Activated T-helper 1 cell treated with anti-CD3 and anti-CD28 coated beads, Interleukin-12 subunit alpha, Interleukin-12 subunit beta, Interleukin-2, Interleukin-4 antibody, amounts not matched to agents 30 ng/mL and 10 ng/mL and 1 ng/mL, durations not matched to agents 14 hours and 24 hours and 36 hours (primary cell): ENCODE measurements at regions of chr10 and their contacts with region 1.

Region 1: GRCh38 chr10:6014241-6014761 is 37.0 kb upstream of the IL15RA start:
- DNase-seq: peak; percentile 30
- H3K4me3 Mint-ChIP-seq: peak overlapping the region; percentile 13
- H3K27ac Mint-ChIP-seq: peak overlapping the region; percentile 78
- H3K4me1 Mint-ChIP-seq: peaks cover 74% of the 10 kb centered on the region
- H3K27me3 Mint-ChIP-seq: no peaks in the 10 kb centered on the region

Region 2: DNA sequence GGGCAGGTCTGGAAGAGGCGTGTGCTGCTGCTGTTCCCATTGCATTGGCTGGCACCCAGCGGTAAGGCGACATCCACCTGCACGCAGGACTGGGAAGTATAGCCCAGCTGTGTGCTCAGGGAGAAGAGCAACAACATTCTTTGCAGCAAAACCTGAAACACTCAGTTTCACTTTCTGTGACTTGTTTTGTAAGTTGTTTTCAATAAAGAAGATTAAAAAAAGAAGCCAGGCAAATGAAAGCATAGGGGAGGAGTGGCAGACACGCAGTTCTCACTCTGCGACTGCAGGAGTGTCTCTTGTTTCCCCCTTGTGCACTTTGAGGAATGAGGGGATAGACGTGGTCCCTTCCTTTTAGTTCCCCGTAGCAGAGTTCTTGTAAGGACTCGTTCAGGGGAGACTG is 118.5 kb before region 1 on chr10:
- intact Hi-C with region 1: no loop called
- DNase-seq: no peak
- H3K4me3 Mint-ChIP-seq: peak overlapping the region; percentile 51
- H3K27ac Mint-ChIP-seq: peak overlapping the region; percentile 45
- H3K4me1 Mint-ChIP-seq: peaks cover 56% of the 10 kb centered on the region
- H3K27me3 Mint-ChIP-seq: no peaks in the 10 kb centered on the region

Region 3: DNA sequence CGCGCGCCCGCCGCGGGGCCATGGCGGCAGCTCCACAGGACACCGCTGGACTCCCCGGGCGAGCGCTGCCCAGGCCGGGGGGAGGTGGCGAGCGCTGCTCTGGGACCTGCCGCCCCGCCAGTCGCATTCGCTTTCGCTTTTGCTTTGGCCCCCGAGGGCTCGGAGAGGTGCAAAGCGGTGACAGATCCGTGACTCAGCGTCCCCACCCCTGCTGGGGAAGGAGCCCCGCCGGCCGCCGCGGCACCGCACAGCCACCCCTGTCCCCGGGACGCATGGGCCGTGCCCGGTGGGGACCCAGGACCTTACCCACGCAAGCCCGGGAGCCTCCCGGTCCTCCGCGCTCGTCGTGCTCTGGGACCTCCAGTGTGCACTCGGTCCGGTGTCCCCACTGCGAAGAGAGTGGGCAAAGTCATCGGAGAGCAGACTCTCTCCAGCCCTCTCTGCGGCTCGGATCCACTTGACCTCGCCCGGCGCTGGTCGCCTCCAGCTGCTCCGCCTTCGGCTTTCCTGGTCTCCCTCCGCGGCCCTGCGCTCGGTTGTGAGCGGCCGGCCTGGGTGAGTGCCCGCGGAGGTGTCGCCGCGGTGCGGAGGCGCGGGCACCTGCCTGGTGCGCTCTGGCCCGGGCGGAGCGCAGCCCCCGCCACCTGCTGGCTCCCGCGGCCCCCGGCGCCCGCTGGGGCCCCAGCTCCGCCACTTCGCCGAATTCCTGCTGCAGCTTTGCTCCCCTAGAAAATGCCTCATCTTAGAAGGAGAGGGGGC is 36.7 kb before region 1 on chr10 and contains the start of gene IL15RA:
- intact Hi-C with region 1: loop called (anchors 1 kb)
- DNase-seq: peak; percentile 88
- H3K4me3 Mint-ChIP-seq: peak within 1 kb of the TSS; percentile 93
- H3K27ac Mint-ChIP-seq: peak within 1 kb of the TSS; percentile 90
- H3K4me1 Mint-ChIP-seq: peaks cover 31% of the 10 kb centered on the region
- H3K27me3 Mint-ChIP-seq: peaks cover 3% of the 10 kb centered on the region
- total RNA-seq, gene IL15RA: 23.4 and 24.4 TPM in 2 replicates

Region 4: DNA sequence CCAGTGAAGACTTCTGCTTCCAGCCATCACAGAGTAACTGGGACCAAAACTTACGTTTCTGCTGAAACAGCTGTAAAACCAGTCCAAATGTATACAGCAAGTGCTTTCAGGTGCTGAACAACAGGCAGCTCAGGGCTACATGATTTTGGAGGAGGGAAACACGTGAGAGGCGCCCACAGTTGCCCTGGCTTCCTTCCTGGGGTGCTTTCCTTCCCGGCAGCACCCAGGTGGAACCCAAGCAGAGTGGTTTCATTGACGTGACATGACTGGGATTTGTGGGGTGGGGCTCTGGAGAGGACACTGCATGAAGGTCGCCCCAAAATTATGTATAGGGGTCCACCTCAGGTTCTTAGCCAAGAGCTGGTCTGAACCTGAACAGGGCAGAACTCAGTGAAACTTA is 13.6 kb after region 1 on chr10:
- intact Hi-C with region 1: loop called (anchors 1 kb)
- DNase-seq: no peak
- H3K4me3 Mint-ChIP-seq: no peak overlapping the region
- H3K27ac Mint-ChIP-seq: peak overlapping the region; percentile 15
- H3K4me1 Mint-ChIP-seq: peaks cover 55% of the 10 kb centered on the region
- H3K27me3 Mint-ChIP-seq: no peaks in the 10 kb centered on the region

Region 5: GRCh38 chr10:6077071-6077675 is 62.9 kb after region 1 on chr10:
- intact Hi-C with region 1: no loop called
- DNase-seq: no peak
- H3K4me3 Mint-ChIP-seq: no peak overlapping the region
- H3K27ac Mint-ChIP-seq: no peak overlapping the region
- H3K4me1 Mint-ChIP-seq: peaks cover 52% of the 10 kb centered on the region
- H3K27me3 Mint-ChIP-seq: no peaks in the 10 kb centered on the region

Region 6: GRCh38 chr10:6088721-6089390 is 74.6 kb after region 1 on chr10 and contains the start of gene RBM17:
- intact Hi-C with region 1: loop called (anchors 1 kb)
- DNase-seq: peak; percentile 98
- H3K4me3 Mint-ChIP-seq: peak within 1 kb of the TSS; percentile 95
- H3K27ac Mint-ChIP-seq: peak within 1 kb of the TSS; percentile 88
- H3K4me1 Mint-ChIP-seq: peaks cover 63% of the 10 kb centered on the region
- H3K27me3 Mint-ChIP-seq: no peaks in the 10 kb centered on the region
- total RNA-seq, gene RBM17: 265 and 283 TPM in 2 replicates

Region 7: GRCh38 chr10:6101181-6101580 is 86.9 kb after region 1 on chr10:
- intact Hi-C with region 1: no loop called
- DNase-seq: no peak
- H3K4me3 Mint-ChIP-seq: no peak overlapping the region
- H3K27ac Mint-ChIP-seq: no peak overlapping the region
- H3K4me1 Mint-ChIP-seq: peaks cover 28% of the 10 kb centered on the region
- H3K27me3 Mint-ChIP-seq: no peaks in the 10 kb centered on the region